H1 (cell line): ENCODE measurements at regions of chr18 and their contacts with region 1.

Region 1: GRCh38 chr18:23635283-23636070 is 27.2 kb downstream of the ANKRD29 start:
- DNase-seq: no peak
- H3K4me3 ChIP-seq: no peak overlapping the region
- H3K27ac ChIP-seq: no peak overlapping the region
- H3K4me1 ChIP-seq: peaks cover 2 to 7% (median 3%) of the 10 kb centered on the region in 4 experiments; a peak in 4 of 7 replicates
- H3K27me3 ChIP-seq: no peaks in the 10 kb centered on the region
- CTCF ChIP-seq: no peak
- EP300 ChIP-seq: no peak
- POLR2A ChIP-seq: no peak
- RAD21 ChIP-seq: no peak

Region 2: DNA sequence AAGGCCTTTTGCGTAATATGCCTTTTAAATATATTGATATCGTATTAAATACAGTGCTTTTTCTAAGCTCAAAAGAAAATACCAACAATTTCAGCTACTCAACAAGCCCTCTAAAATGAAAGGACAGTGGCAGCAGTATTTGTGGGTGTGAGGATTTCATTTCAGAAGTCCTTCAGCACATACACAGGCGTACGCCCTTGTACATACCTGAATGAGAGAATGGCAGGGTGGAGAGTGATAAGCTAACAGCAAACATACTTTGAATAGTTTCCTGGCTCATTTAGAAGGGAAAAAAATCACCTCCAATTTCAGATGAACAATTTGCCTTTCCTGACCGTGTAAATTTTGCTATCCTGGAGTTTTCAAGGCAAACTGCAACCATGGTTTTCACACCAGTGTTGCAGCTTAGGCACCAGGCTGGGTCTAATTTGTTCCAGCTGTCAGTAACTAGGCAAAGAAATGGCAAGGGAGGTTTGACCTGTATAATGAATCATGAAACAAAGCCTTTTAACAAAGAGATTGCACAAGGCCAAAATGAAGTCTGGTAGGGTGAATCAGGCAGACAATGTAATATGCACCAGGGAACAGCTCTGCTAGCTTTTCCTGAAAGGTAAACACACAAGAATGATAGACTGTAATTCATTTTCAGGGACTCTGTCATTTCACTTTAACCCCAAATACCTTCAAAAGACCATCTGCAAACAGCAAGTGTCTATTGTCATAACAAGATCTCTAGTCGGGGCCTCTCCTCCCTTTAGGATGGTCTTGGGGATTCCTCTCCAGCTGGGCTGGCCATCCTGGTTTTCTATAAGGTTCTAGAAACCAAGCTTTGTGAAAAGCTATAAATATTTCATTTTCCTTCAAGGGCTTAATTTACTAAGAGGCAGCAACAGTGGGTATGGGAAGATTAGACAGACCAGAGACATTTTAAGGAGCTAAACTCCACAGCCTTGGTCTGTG is 15.8 kb after region 1 on chr18:
- CTCF ChIA-PET with region 1: interaction called, 27 read pairs
- POLR2A ChIA-PET with region 1: interaction called, 4 read pairs
- DNase-seq: no peak
- H3K4me3 ChIP-seq: no peak overlapping the region
- H3K27ac ChIP-seq: no peak overlapping the region
- H3K4me1 ChIP-seq: peaks cover 0 to 5% (median 5%) of the 10 kb centered on the region in 4 experiments; a peak in 5 of 7 replicates
- H3K27me3 ChIP-seq: no peaks in the 10 kb centered on the region
- CTCF ChIP-seq: no peak
- EP300 ChIP-seq: no peak
- POLR2A ChIP-seq: no peak
- RAD21 ChIP-seq: no peak